ENCODE measurements at regions of chr1 and their contacts with region 1.

Region 1: GRCh38 chr1:9823943-9824701 is at the start of gene CLSTN1:
- DNase-seq: peak; percentile 96
- ATAC-seq: peak; percentile 72
- H3K4me3 Mint-ChIP-seq: peak within 1 kb of the TSS; percentile 96
- H3K27ac Mint-ChIP-seq: peak within 1 kb of the TSS; percentile 89
- H3K4me1 Mint-ChIP-seq: peaks cover 35% of the 10 kb centered on the region
- H3K27me3 Mint-ChIP-seq: peaks cover 9% of the 10 kb centered on the region
- total RNA-seq, gene CLSTN1: 34.9 to 36.7 TPM

Region 2: GRCh38 chr1:9234223-9235095 is 589.7 kb before region 1 on chr1 and contains the start of gene H6PD:
- CTCF ChIA-PET with region 1: no interaction called
- POLR2A ChIA-PET with region 1: no interaction called
- intact Hi-C with region 1: loop called in 1 of 2 experiments (anchors 10 kb)
- DNase-seq: peak; percentile 80
- ATAC-seq: peak; percentile 76
- H3K4me3 Mint-ChIP-seq: peak within 1 kb of the TSS; percentile 82
- H3K27ac Mint-ChIP-seq: peak within 1 kb of the TSS; percentile 90
- H3K4me1 Mint-ChIP-seq: peaks cover 41% of the 10 kb centered on the region
- H3K27me3 Mint-ChIP-seq: no peaks in the 10 kb centered on the region
- total RNA-seq, gene H6PD: 8.8 to 9.6 TPM

Region 3: DNA sequence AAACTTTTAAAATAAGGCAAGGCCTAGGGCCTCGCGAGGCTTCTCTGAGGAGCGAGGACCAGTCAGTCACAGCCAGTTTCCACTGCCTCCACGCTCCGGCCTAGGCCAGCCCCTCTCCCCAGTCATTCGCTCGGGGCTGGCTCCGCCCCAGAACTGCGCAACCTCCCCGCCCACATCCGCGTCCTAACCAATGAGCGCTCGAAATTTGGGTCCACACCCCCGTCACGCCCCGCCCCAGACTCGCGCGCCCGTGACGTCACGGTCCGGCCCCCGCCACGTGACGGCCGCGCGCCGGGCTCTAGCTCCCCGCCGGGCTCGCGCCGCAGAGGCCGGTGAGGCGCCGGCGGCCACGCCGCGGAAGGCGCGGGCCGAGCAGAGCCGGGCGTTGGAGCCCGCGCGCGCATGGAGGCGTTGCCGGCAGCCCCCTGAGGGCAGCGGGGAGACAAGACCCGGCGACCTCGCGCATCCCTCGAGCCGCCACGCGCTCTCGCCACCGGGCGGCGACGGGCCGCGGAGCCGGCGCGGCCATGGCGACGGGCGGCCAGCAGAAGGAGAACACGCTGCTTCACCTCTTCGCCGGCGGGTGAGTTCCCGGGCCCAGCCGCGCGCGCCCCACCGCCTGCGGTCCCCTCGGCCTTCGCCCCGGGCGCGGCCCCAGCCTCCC is 284.8 kb before region 1 on chr1 and contains the start of gene SLC25A33:
- CTCF ChIA-PET with region 1: no interaction called
- POLR2A ChIA-PET with region 1: no interaction called
- intact Hi-C with region 1: loop called in 1 of 2 experiments (anchors 2 kb)
- DNase-seq: peak; percentile 99
- ATAC-seq: peak; percentile 99
- H3K4me3 Mint-ChIP-seq: peak within 1 kb of the TSS; percentile 80
- H3K27ac Mint-ChIP-seq: peak within 1 kb of the TSS; percentile 78
- H3K4me1 Mint-ChIP-seq: peaks cover 30% of the 10 kb centered on the region
- H3K27me3 Mint-ChIP-seq: no peaks in the 10 kb centered on the region
- total RNA-seq, gene SLC25A33: 4.4 to 6.1 TPM

Region 4: GRCh38 chr1:9724706-9725476 is 99.2 kb before region 1 on chr1:
- CTCF ChIA-PET with region 1: no interaction called
- POLR2A ChIA-PET with region 1: no interaction called
- intact Hi-C with region 1: loop called in 1 of 2 experiments (anchors 1 kb)
- DNase-seq: peak; percentile 84
- ATAC-seq: peak; percentile 24
- H3K4me3 Mint-ChIP-seq: no peak overlapping the region
- H3K27ac Mint-ChIP-seq: no peak overlapping the region
- H3K4me1 Mint-ChIP-seq: peaks cover 61% of the 10 kb centered on the region
- H3K27me3 Mint-ChIP-seq: no peaks in the 10 kb centered on the region

Region 5: GRCh38 chr1:9784508-9785133 is 39.5 kb before region 1 on chr1:
- CTCF ChIA-PET with region 1: interaction called, 6 read pairs
- POLR2A ChIA-PET with region 1: no interaction called
- intact Hi-C with region 1: loop called (anchors 1 to 2 kb)
- DNase-seq: peak; percentile 83
- ATAC-seq: peak; percentile 45
- H3K4me3 Mint-ChIP-seq: no peak overlapping the region
- H3K27ac Mint-ChIP-seq: no peak overlapping the region
- H3K4me1 Mint-ChIP-seq: peaks cover 39% of the 10 kb centered on the region
- H3K27me3 Mint-ChIP-seq: no peaks in the 10 kb centered on the region

Region 6: DNA sequence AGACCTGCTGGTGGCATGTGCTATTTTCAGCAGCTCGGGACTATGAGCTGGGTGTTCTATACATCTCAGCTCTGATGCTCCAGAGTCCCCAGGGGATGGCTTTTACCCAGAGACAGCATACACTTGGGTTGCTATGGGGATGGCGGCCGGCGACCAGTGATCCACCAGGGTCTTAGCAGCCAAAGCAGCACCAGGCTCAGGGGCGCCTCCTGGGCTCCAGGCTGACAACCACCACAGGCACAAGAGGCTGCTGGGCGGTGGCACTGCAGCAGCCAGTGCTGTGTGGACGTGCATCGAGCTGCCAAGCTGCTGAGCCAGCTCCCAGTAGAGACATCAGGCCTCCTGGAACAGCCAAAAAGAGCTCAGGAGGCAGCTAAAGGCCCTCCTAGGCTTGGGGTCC is 37.2 kb after region 1 on chr1:
- CTCF ChIA-PET with region 1: interaction called, 3 read pairs
- POLR2A ChIA-PET with region 1: no interaction called
- intact Hi-C with region 1: loop called in 1 of 2 experiments (anchors 5 kb)
- DNase-seq: no peak
- ATAC-seq: no peak
- H3K4me3 Mint-ChIP-seq: no peak overlapping the region
- H3K27ac Mint-ChIP-seq: no peak overlapping the region
- H3K4me1 Mint-ChIP-seq: peaks cover 10% of the 10 kb centered on the region
- H3K27me3 Mint-ChIP-seq: no peaks in the 10 kb centered on the region

Region 7: DNA sequence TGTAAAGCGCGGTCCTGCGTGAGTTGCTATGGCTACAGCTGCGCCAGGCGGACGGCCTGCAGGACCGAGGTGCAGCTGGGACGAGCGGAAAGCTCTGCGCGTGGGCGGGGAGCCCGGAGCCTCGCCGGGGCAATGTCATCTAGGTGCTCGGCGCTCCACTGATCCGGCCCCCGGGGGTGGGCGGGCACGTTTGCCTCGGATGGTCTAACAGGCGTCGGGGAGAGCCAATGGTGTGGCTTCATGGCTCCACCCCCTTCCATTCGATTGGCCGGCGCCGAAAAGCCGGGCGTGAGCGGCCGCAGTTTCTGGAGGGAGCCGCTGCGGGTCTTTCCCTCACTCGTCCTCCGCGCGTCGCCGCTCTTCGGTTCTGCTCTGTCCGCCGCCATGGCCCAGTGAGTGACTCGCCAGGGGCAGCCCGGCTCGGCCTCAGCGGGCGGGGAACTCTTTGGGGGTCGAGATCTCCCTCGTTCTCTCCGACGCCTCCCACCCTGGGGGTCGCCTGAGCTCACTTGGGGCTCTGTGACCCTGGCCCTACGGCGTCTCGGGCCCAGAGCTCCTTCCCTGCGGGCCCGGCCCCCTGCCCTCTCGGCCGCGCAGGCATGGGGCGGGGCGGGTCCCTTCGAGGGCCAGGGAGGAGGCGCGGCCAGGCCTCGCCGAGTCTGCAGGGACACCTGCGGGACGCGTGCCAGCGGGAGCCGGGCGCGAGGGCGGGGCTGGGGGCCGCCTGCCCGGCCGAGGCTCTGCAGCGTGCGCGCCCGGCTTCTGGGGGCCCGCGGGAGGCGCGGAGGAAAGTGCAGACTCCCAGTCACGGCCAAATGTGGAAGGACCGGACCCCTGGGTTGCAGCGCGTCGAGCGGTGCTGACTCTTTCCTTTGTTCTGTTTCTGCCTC is 574.9 kb after region 1 on chr1 and contains the start of gene PGD:
- CTCF ChIA-PET with region 1: no interaction called
- POLR2A ChIA-PET with region 1: no interaction called
- intact Hi-C with region 1: loop called in 1 of 2 experiments (anchors 2 kb)
- DNase-seq: peak; percentile 99
- ATAC-seq: peak; percentile 97
- H3K4me3 Mint-ChIP-seq: peak within 1 kb of the TSS; percentile 86
- H3K27ac Mint-ChIP-seq: peak within 1 kb of the TSS; percentile 78
- H3K4me1 Mint-ChIP-seq: peaks cover 31% of the 10 kb centered on the region
- H3K27me3 Mint-ChIP-seq: no peaks in the 10 kb centered on the region
- total RNA-seq, gene PGD: 91.6 to 93.7 TPM

Measured in activated CD4-positive, alpha-beta T cell treated with anti-CD3 and anti-CD28 coated beads for 36 hours (primary cell).